ENCODE measurements at regions of chr18 and their contacts with region 1.

Region 1: GRCh38 chr18:13381944-13382365 is 163.4 kb downstream of the LDLRAD4 start:
- DNase-seq: peak in 8 of 14 experiments; percentile 34 to 84 (median 52)
- ATAC-seq: peak; percentile 41
- H3K4me3 ChIP-seq: peak overlapping the region; percentile 57
- H3K4me3 Mint-ChIP-seq: peak overlapping the region; percentile 95
- H3K27ac ChIP-seq: peak overlapping the region; percentile 91 to 94
- H3K27ac Mint-ChIP-seq: peak overlapping the region; percentile 98
- H3K4me1 ChIP-seq: peaks cover 64% of the 10 kb centered on the region
- H3K4me1 Mint-ChIP-seq: peaks cover 80% of the 10 kb centered on the region
- H3K27me3 ChIP-seq: no peaks in the 10 kb centered on the region
- H3K27me3 Mint-ChIP-seq: no peaks in the 10 kb centered on the region
- CTCF ChIP-seq: no peak

Region 2: DNA sequence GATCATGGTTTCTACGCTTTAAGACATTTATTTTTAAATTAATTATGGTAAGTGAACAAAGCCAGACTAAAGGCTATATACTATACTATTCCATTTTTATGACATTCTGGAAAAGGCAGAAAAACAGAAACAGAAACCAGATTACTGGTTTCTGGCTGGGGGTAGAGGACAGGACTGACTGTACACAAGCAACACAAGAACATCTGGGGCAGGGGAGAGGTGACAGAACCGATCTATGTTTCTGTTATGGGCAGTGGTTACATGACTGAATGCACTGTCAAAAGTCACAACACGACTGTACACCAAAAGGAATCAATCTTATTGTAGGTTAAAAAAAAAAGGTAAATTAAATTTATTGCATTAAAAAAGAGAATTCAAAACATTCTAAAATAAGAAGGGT is 562.6 kb before region 1 on chr18:
- CTCF ChIA-PET with region 1: no interaction called
- POLR2A ChIA-PET with region 1: no interaction called
- intact Hi-C with region 1: no loop called
- DNase-seq: no peak
- ATAC-seq: no peak
- H3K4me3 ChIP-seq: no peak overlapping the region
- H3K4me3 Mint-ChIP-seq: no peak overlapping the region
- H3K27ac ChIP-seq: no peak overlapping the region
- H3K27ac Mint-ChIP-seq: no peak overlapping the region
- H3K4me1 ChIP-seq: no peaks in the 10 kb centered on the region
- H3K4me1 Mint-ChIP-seq: no peaks in the 10 kb centered on the region
- H3K27me3 ChIP-seq: no peaks in the 10 kb centered on the region
- H3K27me3 Mint-ChIP-seq: no peaks in the 10 kb centered on the region
- CTCF ChIP-seq: no peak

Region 3: GRCh38 chr18:12872408-12872807 is 509.5 kb before region 1 on chr18:
- CTCF ChIA-PET with region 1: no interaction called
- POLR2A ChIA-PET with region 1: no interaction called
- intact Hi-C with region 1: no loop called
- DNase-seq: no peak
- ATAC-seq: no peak
- H3K4me3 ChIP-seq: no peak overlapping the region
- H3K4me3 Mint-ChIP-seq: no peak overlapping the region
- H3K27ac ChIP-seq: no peak overlapping the region
- H3K27ac Mint-ChIP-seq: peak overlapping the region; percentile 47
- H3K4me1 ChIP-seq: peaks cover 3% of the 10 kb centered on the region
- H3K4me1 Mint-ChIP-seq: peaks cover 42% of the 10 kb centered on the region
- H3K27me3 ChIP-seq: no peaks in the 10 kb centered on the region
- H3K27me3 Mint-ChIP-seq: no peaks in the 10 kb centered on the region
- CTCF ChIP-seq: no peak

Region 4: GRCh38 chr18:13191779-13192178 is 190.2 kb before region 1 on chr18:
- CTCF ChIA-PET with region 1: no interaction called
- POLR2A ChIA-PET with region 1: no interaction called
- intact Hi-C with region 1: no loop called
- DNase-seq: no peak
- ATAC-seq: no peak
- H3K4me3 ChIP-seq: no peak overlapping the region
- H3K4me3 Mint-ChIP-seq: no peak overlapping the region
- H3K27ac ChIP-seq: no peak overlapping the region
- H3K27ac Mint-ChIP-seq: no peak overlapping the region
- H3K4me1 ChIP-seq: no peaks in the 10 kb centered on the region
- H3K4me1 Mint-ChIP-seq: no peaks in the 10 kb centered on the region
- H3K27me3 ChIP-seq: no peaks in the 10 kb centered on the region
- H3K27me3 Mint-ChIP-seq: peaks cover 7% of the 10 kb centered on the region
- CTCF ChIP-seq: no peak

Region 5: DNA sequence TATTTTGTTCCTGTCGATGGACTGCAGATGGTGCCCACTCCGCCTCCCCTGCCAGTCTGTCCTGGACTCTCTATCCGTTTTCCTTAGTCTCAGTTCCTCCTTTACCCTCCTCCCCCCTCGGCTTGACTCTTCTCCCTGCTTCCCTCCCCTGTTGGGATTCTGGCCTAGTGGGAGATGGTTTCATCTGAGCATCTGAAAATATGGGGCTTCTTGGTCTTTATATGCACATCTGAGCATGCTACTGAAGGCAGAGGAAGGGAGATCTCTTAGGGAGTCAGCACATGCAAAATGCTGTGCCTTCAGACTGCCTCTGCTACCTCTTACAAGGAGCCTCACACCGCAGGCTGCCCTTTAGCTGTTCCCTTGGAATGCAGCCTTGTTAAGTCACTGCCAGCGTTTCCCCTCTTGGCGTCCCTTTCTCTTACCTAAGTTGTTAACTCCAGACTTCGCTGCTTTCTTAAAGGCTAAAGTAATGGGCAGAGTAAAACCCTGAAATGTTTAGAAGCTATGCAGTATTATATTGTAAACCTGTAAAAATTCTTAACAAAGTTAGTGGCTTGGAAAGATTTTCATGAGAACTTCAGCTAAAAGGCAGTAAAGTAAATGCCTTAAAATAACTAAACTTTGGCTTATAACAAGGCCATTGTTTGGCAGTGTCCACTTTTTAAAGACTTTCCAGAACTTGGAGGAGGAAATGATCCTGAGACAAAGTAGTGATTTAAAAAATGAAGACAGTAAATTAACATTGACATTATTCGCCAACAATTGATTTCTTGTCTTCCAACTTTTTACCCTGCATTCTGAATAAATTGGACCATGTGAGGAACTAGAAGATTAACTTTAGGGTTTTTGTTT is 113.6 kb before region 1 on chr18:
- CTCF ChIA-PET with region 1: no interaction called
- POLR2A ChIA-PET with region 1: no interaction called
- intact Hi-C with region 1: loop called (anchors 2 to 5 kb)
- DNase-seq: no peak
- ATAC-seq: no peak
- H3K4me3 ChIP-seq: no peak overlapping the region
- H3K4me3 Mint-ChIP-seq: peak overlapping the region; percentile 67
- H3K27ac ChIP-seq: no peak overlapping the region
- H3K27ac Mint-ChIP-seq: peak overlapping the region; percentile 82
- H3K4me1 ChIP-seq: peaks cover 57% of the 10 kb centered on the region
- H3K4me1 Mint-ChIP-seq: peaks cover 73% of the 10 kb centered on the region
- H3K27me3 ChIP-seq: no peaks in the 10 kb centered on the region
- H3K27me3 Mint-ChIP-seq: no peaks in the 10 kb centered on the region
- CTCF ChIP-seq: no peak

Region 6: GRCh38 chr18:13435596-13436327 is 53.8 kb after region 1 on chr18:
- CTCF ChIA-PET with region 1: no interaction called
- POLR2A ChIA-PET with region 1: no interaction called
- intact Hi-C with region 1: loop called in 1 of 2 experiments (anchors 5 kb)
- DNase-seq: peak in 2 of 14 experiments; percentile 36 to 55
- ATAC-seq: peak; percentile 15
- H3K4me3 ChIP-seq: no peak overlapping the region
- H3K4me3 Mint-ChIP-seq: peak overlapping the region; percentile 46
- H3K27ac ChIP-seq: peak overlapping the region in 1 of 2 donors; percentile 58
- H3K27ac Mint-ChIP-seq: peak overlapping the region; percentile 88
- H3K4me1 ChIP-seq: peaks cover 47% of the 10 kb centered on the region
- H3K4me1 Mint-ChIP-seq: peaks cover 61% of the 10 kb centered on the region
- H3K27me3 ChIP-seq: no peaks in the 10 kb centered on the region
- H3K27me3 Mint-ChIP-seq: no peaks in the 10 kb centered on the region
- CTCF ChIP-seq: no peak

Region 7: DNA sequence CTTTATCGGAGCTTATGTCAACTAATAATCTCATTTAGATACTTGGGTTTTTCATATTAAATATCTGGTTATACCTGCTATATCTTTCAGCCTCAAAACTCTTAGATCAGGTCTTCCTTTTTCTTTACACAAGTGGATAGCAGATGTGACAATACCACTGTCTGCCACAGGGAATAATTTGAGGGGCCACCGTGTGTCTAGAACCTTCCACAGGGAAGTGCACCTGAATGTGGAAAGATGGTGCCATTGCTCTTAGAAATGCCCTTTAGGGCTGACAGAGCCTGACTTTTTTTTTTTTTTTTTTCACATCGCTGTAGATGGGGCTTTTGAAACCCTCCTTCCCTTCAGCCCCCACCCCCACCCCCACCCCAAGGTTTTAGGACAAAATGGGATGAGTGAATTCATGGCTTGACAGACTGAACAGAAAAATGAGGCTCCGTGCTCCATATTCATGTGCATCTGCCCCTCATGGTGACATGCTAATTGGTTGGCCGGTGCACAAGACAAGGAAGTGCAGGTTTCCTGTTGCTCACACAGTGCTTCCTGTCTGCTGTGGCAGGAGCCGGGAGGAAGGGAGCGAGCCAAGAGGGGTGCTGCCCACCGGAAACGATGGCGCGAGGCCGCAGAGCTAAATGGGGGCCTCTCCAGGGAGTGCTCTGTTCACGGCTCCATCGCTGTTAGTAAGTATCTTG is 82.6 kb after region 1 on chr18:
- CTCF ChIA-PET with region 1: no interaction called
- POLR2A ChIA-PET with region 1: interaction called, 4 read pairs
- intact Hi-C with region 1: loop called in 1 of 2 experiments (anchors 5 kb)
- DNase-seq: peak; percentile 36 to 86 (median 68)
- ATAC-seq: peak; percentile 95
- H3K4me3 ChIP-seq: peak overlapping the region; percentile 63
- H3K4me3 Mint-ChIP-seq: peak overlapping the region; percentile 91
- H3K27ac ChIP-seq: peak overlapping the region; percentile 60 to 64
- H3K27ac Mint-ChIP-seq: peak overlapping the region; percentile 97
- H3K4me1 ChIP-seq: peaks cover 50% of the 10 kb centered on the region
- H3K4me1 Mint-ChIP-seq: peaks cover 86% of the 10 kb centered on the region
- H3K27me3 ChIP-seq: no peaks in the 10 kb centered on the region
- H3K27me3 Mint-ChIP-seq: no peaks in the 10 kb centered on the region
- CTCF ChIP-seq: peak; percentile 19

Region 8: GRCh38 chr18:13539050-13539449 is 157.1 kb after region 1 on chr18:
- CTCF ChIA-PET with region 1: no interaction called
- POLR2A ChIA-PET with region 1: interaction called, 3 read pairs
- intact Hi-C with region 1: loop called in 1 of 2 experiments (anchors 2 kb)
- DNase-seq: peak in 11 of 14 experiments; percentile 14 to 71 (median 44)
- ATAC-seq: peak; percentile 93
- H3K4me3 ChIP-seq: no peak overlapping the region
- H3K4me3 Mint-ChIP-seq: peak overlapping the region; percentile 83
- H3K27ac ChIP-seq: peak overlapping the region in 1 of 2 donors; percentile 12
- H3K27ac Mint-ChIP-seq: peak overlapping the region; percentile 89
- H3K4me1 ChIP-seq: peaks cover 27% of the 10 kb centered on the region
- H3K4me1 Mint-ChIP-seq: peaks cover 81% of the 10 kb centered on the region
- H3K27me3 ChIP-seq: no peaks in the 10 kb centered on the region
- H3K27me3 Mint-ChIP-seq: no peaks in the 10 kb centered on the region
- CTCF ChIP-seq: no peak